ENCODE measurements at regions of chr22 and their contacts with region 1.

Region 1: DNA sequence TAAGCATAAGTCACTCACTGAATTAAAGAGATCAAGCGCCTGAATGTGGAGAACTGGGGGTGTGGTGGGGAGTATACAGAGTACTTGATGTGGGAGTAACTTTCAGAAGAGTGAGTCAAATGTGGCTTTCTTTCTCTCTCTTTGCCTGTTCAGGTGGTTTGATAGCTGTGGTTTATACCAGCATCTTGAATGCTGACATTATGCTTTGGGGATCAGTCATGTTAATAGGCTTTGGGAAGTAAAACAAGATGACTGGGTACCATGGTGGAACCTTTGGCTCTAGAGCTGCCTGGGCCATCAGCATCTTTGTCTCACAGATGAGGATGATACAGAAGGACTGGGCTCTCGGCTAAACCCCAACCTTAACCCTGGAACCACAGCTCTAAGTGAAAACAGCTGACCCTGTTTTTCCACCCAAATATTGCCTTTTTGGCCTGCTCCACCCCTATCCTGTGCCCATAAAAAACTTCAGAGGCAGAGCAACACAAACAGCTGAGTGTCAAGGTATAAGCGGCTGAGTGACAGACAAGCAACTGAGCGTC is 58.2 kb upstream of the GNAZ start:
- DNase-seq: peak; percentile 21
- H3K4me3 Mint-ChIP-seq: no peak overlapping the region
- H3K27ac Mint-ChIP-seq: peak overlapping the region; percentile 55
- H3K4me1 Mint-ChIP-seq: peaks cover 30% of the 10 kb centered on the region
- H3K27me3 Mint-ChIP-seq: peaks cover 41% of the 10 kb centered on the region

Region 2: DNA sequence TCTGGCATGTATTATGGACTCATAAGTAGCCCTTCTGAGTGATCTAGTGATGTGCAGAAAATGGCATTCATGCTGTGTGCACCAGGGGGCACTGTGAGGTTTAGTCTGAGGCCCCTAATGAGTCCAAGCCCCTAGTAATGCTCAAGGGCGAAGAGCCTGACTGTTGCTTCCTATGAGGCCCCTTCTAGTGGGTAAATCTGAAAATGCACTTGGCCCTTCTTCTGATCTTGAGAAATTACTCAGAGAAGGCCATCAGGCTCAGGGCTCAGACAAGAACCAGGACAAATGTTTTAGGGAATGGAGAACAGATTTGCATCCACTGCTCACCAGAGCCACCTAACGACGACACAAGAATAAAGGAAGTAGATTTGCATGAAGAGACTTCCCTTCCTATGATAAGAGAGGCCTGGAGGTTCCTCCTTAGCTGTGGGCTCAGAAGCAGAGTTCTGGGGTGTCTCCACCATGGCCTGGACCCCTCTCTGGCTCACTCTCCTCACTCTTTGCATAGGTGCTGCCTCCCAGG is 291.9 kb before region 1 on chr22:
- intact Hi-C with region 1: loop called (anchors 5 kb)
- DNase-seq: no peak
- H3K4me3 Mint-ChIP-seq: no peak overlapping the region
- H3K27ac Mint-ChIP-seq: no peak overlapping the region
- H3K4me1 Mint-ChIP-seq: peaks cover 32% of the 10 kb centered on the region
- H3K27me3 Mint-ChIP-seq: peaks cover 14% of the 10 kb centered on the region

Region 3: GRCh38 chr22:22865311-22866072 is 146.7 kb before region 1 on chr22:
- intact Hi-C with region 1: loop called (anchors 1 kb)
- DNase-seq: peak; percentile 27
- H3K4me3 Mint-ChIP-seq: no peak overlapping the region
- H3K27ac Mint-ChIP-seq: peak overlapping the region; percentile 55
- H3K4me1 Mint-ChIP-seq: peaks cover 35% of the 10 kb centered on the region
- H3K27me3 Mint-ChIP-seq: peaks cover 55% of the 10 kb centered on the region

Region 4: DNA sequence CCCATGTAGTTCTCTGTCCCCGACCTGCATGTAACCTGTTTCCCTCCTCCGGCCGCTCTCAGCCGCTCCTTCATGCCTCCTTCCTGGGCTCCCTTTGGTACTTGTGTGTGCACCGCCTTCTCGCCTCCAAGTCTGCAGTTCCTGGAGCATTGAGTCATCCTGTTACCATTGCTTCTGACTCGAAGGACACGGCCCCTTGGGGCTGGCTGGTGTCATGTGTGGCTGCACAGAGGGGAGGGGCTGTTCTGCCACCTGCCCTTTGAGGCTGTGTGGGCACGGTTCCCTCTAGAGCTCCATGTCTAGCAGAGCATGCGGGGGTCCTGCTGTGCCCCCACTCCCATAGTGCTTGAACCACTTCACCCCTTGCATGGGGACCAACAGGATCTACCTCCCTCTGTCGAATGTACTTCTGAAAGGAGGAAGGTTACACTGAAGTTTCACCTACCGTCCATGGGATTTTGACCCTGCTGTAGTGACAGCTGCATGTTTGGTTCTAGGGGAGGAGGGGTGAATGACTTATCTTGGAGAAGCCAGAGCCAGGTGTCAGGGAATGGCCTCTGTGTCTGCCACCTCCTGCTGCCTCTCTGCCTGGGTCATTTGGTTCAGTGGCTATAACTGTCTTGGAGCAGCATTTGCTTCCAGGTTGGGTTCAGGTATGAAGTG is 207.8 kb after region 1 on chr22:
- intact Hi-C with region 1: loop called (anchors 1 kb)
- DNase-seq: peak; percentile 57
- H3K4me3 Mint-ChIP-seq: peak overlapping the region; percentile 76
- H3K27ac Mint-ChIP-seq: peak overlapping the region; percentile 94
- H3K4me1 Mint-ChIP-seq: peaks cover 92% of the 10 kb centered on the region
- H3K27me3 Mint-ChIP-seq: no peaks in the 10 kb centered on the region

Region 5: GRCh38 chr22:23240639-23241389 is 228.7 kb after region 1 on chr22:
- intact Hi-C with region 1: loop called (anchors 5 kb)
- DNase-seq: no peak
- H3K4me3 Mint-ChIP-seq: peak overlapping the region; percentile 21
- H3K27ac Mint-ChIP-seq: peak overlapping the region; percentile 91
- H3K4me1 Mint-ChIP-seq: peaks cover 75% of the 10 kb centered on the region
- H3K27me3 Mint-ChIP-seq: no peaks in the 10 kb centered on the region

Measured in activated T-helper 1 cell treated with anti-CD3 and anti-CD28 coated beads, Interleukin-12 subunit alpha, Interleukin-12 subunit beta, Interleukin-2, Interleukin-4 antibody, amounts not matched to agents 30 ng/mL and 10 ng/mL and 1 ng/mL, durations not matched to agents 14 hours and 24 hours and 36 hours (primary cell).